Tibial artery (tissue), 4 donors: ENCODE measurements at regions of chr15 and their contacts with region 1.

Region 1: DNA sequence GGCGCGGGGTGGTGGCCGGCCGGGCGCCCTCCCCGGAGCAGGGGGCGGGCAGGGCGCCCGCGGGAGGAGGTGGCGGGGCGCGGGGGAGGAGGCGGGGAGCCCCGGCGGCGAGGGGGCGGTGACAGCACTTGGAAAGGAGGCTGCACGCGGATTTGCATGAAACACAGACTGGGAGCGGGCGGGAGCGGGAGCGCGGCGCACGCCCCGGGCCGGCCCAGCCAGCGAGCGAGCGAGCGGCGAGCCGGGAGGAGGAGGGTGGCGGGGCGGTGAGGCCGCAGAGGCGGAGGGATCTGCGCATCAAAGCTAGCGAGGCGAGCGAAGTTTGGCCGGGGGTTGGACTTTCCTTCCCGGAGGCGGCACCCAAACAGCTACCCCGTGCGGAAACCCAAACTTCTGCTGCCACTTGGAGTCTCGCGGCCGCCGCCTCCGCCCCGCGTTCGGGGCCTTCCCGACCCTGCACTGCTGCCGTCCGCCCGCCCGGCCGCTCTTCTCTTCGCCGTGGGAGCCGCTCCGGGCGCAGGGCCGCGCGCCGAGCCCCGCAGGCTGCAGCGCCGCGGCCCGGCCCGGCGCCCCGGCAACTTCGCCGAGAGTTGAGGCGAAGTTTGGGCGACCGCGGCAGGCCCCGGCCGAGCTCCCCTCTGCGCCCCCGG is at the start of gene SMAD3:
- DNase-seq: peak; percentile 89 to 95
- H3K4me3 ChIP-seq: peak within 1 kb of the TSS; percentile 76 to 93
- H3K27ac ChIP-seq: peak within 1 kb of the TSS; percentile 90 to 93
- H3K4me1 ChIP-seq: peaks cover 0 to 33% (median 27%) of the 10 kb centered on the region in 4 donors
- H3K27me3 ChIP-seq: no peaks in the 10 kb centered on the region
- CTCF ChIP-seq: no peak

Region 2: GRCh38 chr15:67109141-67110034 is 43.8 kb after region 1 on chr15:
- intact Hi-C with region 1: loop called (anchors 10 kb)
- DNase-seq: peak; percentile 72 to 83
- H3K4me3 ChIP-seq: no peak overlapping the region
- H3K27ac ChIP-seq: no peak overlapping the region
- H3K4me1 ChIP-seq: peaks cover 10 to 67% (median 53%) of the 10 kb centered on the region in 4 donors
- H3K27me3 ChIP-seq: no peaks in the 10 kb centered on the region
- CTCF ChIP-seq: no peak

Region 3: DNA sequence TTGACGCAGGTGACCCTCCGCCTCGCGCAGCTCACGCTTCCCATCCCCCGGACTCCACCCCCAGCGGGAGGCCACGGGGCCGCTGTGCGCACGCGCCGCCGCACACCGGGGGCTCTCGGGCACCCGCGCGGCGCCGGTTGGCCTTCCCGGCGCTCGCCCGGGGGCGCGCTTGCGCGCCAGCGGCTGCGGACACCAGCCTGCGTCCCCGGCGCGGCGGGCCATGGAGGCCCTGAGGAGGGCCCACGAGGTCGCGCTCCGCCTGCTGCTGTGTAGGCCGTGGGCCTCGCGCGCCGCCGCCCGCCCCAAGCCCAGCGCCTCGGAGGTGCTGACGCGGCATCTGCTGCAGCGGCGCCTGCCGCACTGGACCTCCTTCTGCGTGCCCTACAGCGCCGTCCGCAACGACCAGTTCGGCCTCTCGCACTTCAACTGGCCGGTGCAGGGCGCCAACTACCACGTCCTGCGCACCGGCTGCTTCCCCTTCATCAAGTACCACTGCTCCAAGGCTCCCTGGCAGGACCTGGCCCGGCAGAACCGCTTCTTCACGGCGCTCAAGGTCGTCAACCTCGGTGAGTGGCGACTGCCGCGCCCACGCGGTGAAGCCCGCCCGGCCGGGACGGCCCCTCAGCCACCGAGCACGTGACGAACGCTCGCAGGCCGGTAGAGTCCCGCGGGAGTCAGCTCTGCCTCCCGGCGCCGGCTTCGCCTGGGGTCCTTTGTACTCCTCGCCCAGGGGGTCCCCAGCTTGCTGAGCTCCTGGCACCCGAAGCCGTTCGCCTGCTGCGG is 455.7 kb after region 1 on chr15 and contains the start of gene C15orf61:
- intact Hi-C with region 1: loop called (anchors 5 kb)
- DNase-seq: peak; percentile 79 to 93
- H3K4me3 ChIP-seq: peak within 1 kb of the TSS; percentile 86 to 87
- H3K27ac ChIP-seq: peak within 1 kb of the TSS; percentile 96
- H3K4me1 ChIP-seq: peaks cover 0 to 34% (median 17%) of the 10 kb centered on the region in 4 donors
- H3K27me3 ChIP-seq: no peaks in the 10 kb centered on the region
- CTCF ChIP-seq: no peak